ENCODE measurements at regions of chr20 and their contacts with region 1.

Region 1: DNA sequence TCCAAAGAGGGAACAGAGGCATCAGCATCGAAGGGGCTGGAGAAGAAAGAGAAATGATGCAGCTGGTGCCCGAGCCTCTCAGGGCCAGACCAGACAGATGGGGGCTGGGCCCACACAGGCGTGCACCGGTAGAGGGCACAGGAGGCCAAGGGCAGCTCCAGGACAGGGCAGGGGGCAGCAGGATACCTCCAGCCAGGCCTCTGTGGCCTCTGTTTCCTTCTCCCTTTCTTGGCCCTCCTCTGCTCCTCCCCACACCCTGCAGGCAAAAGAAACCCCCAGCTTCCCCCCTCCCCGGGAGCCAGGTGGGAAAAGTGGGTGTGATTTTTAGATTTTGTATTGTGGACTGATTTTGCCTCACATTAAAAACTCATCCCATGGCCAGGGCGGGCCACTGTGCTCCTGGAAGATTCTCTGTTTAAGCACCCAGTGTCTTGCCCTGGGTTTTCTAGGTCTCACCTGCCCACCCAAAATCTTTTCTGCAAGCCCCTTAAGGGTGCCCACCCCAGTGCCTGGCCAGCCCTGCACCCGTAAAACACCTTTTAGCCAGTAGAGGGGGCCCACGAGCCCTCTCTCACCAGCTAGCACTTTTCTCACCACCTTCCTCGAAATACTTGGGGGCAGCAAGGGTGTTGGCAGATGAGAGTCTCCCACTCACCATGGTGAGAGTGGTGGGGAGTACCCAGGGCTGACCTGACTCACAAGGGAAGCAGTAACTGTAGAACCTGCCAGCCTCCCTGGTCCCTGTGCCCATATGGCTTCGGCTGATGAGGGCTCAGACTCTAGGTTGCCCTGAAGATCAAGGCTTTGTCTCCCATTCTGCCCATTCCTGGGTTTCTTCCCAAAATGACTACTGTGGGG is 35.7 kb upstream of the ID1 start:
- DNase-seq: peak; percentile 45 to 65 (median 57)
- ATAC-seq: no peak
- H3K4me3 ChIP-seq: no peak overlapping the region
- H3K27ac ChIP-seq: peak overlapping the region in 3 of 4 donors; percentile 2 to 94 (median 93)
- H3K4me1 ChIP-seq: peaks cover 30% of the 10 kb centered on the region
- H3K27me3 ChIP-seq: no peaks in the 10 kb centered on the region
- CTCF ChIP-seq: peak; percentile 44 to 80 (median 69)
- POLR2A ChIP-seq: no peak

Region 2: GRCh38 chr20:31605031-31605901 is 35.9 kb after region 1 on chr20 and contains the start of gene ID1:
- intact Hi-C with region 1: loop called (anchors 5 kb)
- DNase-seq: peak; percentile 94 to 95 (median 94)
- ATAC-seq: peak; percentile 83
- H3K4me3 ChIP-seq: peak within 1 kb of the TSS; percentile 31 to 51
- H3K27ac ChIP-seq: peak within 1 kb of the TSS; percentile 68 to 82 (median 74)
- H3K4me1 ChIP-seq: peaks cover 62% of the 10 kb centered on the region
- H3K27me3 ChIP-seq: no peaks in the 10 kb centered on the region
- CTCF ChIP-seq: no peak
- POLR2A ChIP-seq: peak; percentile 89 to 98 (median 98)
- total RNA-seq, gene ID1: 169 to 245 TPM

Region 3: DNA sequence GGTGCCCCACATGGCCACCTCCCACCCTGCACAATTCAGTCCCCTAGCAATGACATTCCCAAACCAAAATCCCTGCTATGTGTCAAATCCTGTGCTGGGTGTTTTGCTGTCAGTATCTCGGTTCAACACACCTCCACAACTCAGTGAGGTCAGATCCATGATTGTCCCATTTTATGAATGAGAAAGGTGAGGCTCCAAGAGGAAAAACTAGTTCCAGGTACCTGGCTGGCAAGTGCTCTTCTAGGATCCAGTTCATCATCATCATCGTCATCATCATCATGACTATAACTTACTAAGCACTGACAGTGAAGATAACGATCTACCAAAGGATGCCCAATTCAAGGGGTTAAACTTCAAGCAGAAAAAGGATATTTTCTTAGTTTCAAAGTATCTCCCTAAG is 50.9 kb after region 1 on chr20:
- intact Hi-C with region 1: no loop called
- DNase-seq: no peak
- ATAC-seq: no peak
- H3K4me3 ChIP-seq: no peak overlapping the region
- H3K27ac ChIP-seq: no peak overlapping the region
- H3K4me1 ChIP-seq: peaks cover 16% of the 10 kb centered on the region
- H3K27me3 ChIP-seq: no peaks in the 10 kb centered on the region
- CTCF ChIP-seq: no peak
- POLR2A ChIP-seq: no peak

Region 4: DNA sequence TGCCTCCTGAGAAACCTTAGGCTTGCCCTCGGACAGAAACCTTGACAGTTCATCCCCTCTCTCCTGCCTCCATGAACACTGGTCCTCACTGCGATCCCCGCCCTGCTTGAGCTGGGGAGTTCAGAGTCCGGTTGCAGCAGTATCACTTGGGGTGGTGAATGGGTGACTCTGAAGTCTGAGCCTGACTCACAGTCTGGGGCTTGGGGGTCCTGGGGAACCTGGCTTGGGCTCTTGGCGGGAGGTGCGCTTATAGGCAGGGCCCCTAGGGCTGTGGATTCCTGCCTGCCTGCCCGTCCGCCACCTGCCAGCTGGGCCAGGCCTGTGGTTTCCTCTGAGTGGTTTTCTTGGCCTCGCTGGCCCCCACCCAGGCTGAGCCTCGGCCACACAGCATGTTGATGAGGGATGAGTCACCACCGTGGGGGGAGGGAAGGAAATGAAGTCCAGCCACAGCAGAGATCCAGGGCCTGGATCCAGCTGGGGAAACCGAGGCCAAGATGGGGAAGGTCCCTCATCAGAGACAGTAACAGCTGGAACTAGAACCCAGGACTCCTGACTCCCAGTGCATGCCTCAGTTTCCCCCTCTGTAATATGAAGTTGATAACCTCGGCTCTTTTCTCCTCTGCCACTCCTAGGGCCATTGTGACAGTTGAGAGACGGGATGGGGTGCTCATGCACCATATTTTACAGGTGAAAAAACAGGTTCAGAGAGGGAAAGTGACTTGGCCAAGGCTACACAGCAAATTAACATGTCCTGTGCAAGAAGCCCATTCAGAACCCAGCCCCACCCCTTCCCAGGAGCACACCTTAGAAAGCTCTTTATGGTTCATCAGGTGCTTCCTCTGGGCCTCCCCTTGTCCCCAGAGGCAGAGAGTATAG is 266.8 kb after region 1 on chr20:
- intact Hi-C with region 1: no loop called
- DNase-seq: peak; percentile 39 to 83 (median 64)
- ATAC-seq: peak; percentile 46
- H3K4me3 ChIP-seq: no peak overlapping the region
- H3K27ac ChIP-seq: no peak overlapping the region
- H3K4me1 ChIP-seq: peaks cover 6% of the 10 kb centered on the region
- H3K27me3 ChIP-seq: no peaks in the 10 kb centered on the region
- CTCF ChIP-seq: no peak
- POLR2A ChIP-seq: no peak